A549 (cell line): ENCODE measurements at regions of chr2 and their contacts with region 1.

Region 1: GRCh38 chr2:127293748-127294562 is at the start of gene ERCC3:
- DNase-seq: peak; percentile 85 to 86
- ATAC-seq: peak; percentile 99
- H3K4me3 ChIP-seq: peak within 1 kb of the TSS; percentile 91
- H3K27ac ChIP-seq: peak within 1 kb of the TSS; percentile 94 to 95
- H3K4me1 ChIP-seq: peaks cover 13% of the 10 kb centered on the region; the same call in 2 of the 3 replicates
- CTCF ChIP-seq: no peak
- EP300 ChIP-seq: no peak
- POLR2A ChIP-seq: peak; percentile 81
- RAD21 ChIP-seq: no peak; a peak in 1 of 5 replicates
- polyA plus RNA-seq, gene ERCC3: 68.3 and 79.0 TPM in 2 replicates

Region 2: GRCh38 chr2:127217485-127218321 is 76.3 kb before region 1 on chr2:
- CTCF ChIA-PET with region 1: no interaction called
- POLR2A ChIA-PET with region 1: interaction called, 11 read pairs
- DNase-seq: peak; percentile 71 to 93
- ATAC-seq: peak; percentile 88
- H3K4me3 ChIP-seq: peak overlapping the region; percentile 89
- H3K27ac ChIP-seq: peak overlapping the region; percentile 93 to 95
- H3K4me1 ChIP-seq: peaks cover 13% of the 10 kb centered on the region
- CTCF ChIP-seq: no peak
- EP300 ChIP-seq: no peak
- POLR2A ChIP-seq: no peak; the same call in 1 of the 2 replicates
- RAD21 ChIP-seq: 0 out of 5 replicates have a peak, but pooled peaks of 1 of the 2 experiments have one; percentile 2

Region 3: DNA sequence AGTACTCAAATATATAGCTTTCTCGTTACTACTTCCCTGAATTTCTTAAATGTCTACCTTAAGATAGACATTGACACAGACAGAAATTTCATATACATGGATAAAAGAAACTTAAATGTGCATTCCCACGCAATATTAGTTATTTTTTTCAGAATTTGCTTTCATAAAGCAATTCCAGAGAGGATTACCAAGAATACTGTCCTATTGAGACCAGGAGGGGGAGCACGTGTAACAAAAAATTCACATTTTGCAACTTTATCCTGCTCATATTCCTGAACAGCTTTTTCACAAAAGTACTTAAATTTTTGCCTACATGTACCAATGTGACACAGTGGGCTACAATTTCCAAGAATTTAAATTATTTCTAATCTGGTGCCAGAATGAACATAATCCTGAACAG is 30.7 kb after region 1 on chr2:
- CTCF ChIA-PET with region 1: interaction called, 10 read pairs
- POLR2A ChIA-PET with region 1: interaction called, 4 read pairs
- DNase-seq: peak; percentile 25 to 63
- ATAC-seq: peak; percentile 70 to 85; a peak in 4 of 6 replicates
- H3K4me3 ChIP-seq: no peak overlapping the region
- H3K27ac ChIP-seq: no peak overlapping the region
- H3K4me1 ChIP-seq: peaks cover 12% of the 10 kb centered on the region; the same call in 2 of the 3 replicates
- CTCF ChIP-seq: peak; percentile 83
- EP300 ChIP-seq: no peak
- POLR2A ChIP-seq: no peak
- RAD21 ChIP-seq: peak; percentile 85 to 88